ENCODE measurements at regions of chr12 and their contacts with region 1.

Region 1: DNA sequence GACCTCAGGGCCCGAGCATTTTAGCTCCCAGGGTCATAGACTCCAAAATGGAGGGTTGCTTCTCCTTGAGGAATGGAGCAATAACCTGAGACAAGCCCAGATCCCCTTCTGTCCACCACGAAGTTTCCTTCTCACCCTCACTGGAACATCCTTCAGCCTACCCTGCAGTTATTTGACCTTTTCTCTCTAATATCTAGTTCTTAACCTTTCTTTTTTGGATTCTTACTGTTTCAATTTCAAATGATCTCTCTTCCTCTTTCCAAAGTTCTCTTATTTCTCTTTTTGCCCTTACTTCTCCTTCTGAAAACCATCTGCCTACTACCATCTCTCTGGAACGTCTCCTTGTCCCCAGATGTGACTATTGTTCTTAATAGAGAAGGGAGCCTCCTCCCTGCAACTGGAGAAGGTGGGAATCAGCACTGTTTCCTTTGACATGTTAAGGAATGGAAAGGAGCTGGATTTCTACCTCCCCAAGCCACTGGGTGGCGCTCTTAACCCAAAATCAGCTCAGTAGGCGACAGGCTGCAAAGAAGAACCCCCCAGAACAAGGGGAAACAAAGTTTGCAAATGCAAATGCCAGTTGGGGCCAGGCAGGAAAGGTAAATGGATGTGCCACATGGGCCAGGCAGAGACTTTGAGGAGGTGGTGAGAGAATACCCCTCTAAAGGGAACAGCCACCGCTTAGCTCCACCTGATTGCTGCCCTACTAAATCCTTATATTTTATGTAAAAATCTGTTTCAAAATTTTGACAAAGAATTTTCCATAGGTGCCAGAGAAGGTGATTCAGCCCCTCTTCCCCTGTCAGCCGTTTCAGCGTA is 22.4 kb upstream of the PDE1B start:
- DNase-seq: peak in 4 of 5 donors; percentile 13 to 44 (median 32)
- ATAC-seq: no peak
- H3K4me3 ChIP-seq: no peak overlapping the region
- H3K27ac ChIP-seq: no peak overlapping the region
- H3K4me1 ChIP-seq: peaks cover 0 to 11% (median 0%) of the 10 kb centered on the region in 12 donors
- H3K27me3 ChIP-seq: peaks cover 0 to 12% (median 0%) of the 10 kb centered on the region in 9 donors
- CTCF ChIP-seq: peak; percentile 23 to 65 (median 48)
- POLR2A ChIP-seq: no peak

Region 2: GRCh38 chr12:54571193-54572188 is 44.5 kb after region 1 on chr12:
- intact Hi-C with region 1: loop called in 2 of 10 experiments (anchors 1 to 5 kb)
- DNase-seq: no peak
- ATAC-seq: no peak
- H3K4me3 ChIP-seq: no peak overlapping the region
- H3K27ac ChIP-seq: no peak overlapping the region
- H3K4me1 ChIP-seq: no peaks in the 10 kb centered on the region
- H3K27me3 ChIP-seq: peaks cover 0 to 30% (median 0%) of the 10 kb centered on the region in 9 donors
- CTCF ChIP-seq: peak in 4 of 12 donors; percentile 8 to 28 (median 14)
- POLR2A ChIP-seq: no peak

Region 3: GRCh38 chr12:54579696-54580333 is 52.8 kb after region 1 on chr12:
- intact Hi-C with region 1: loop called in 1 of 10 experiments (anchors 5 kb)
- DNase-seq: peak; percentile 78 to 90 (median 81)
- ATAC-seq: peak; percentile 90 to 95 (median 92)
- H3K4me3 ChIP-seq: no peak overlapping the region
- H3K27ac ChIP-seq: peak overlapping the region in 1 of 12 donors; percentile 20
- H3K4me1 ChIP-seq: peaks cover 0 to 9% (median 0%) of the 10 kb centered on the region in 12 donors
- H3K27me3 ChIP-seq: peaks cover 0 to 8% (median 0%) of the 10 kb centered on the region in 9 donors
- CTCF ChIP-seq: peak; percentile 98 to 100 (median 99)
- POLR2A ChIP-seq: no peak